MCF 10A (cell line): ENCODE measurements at regions of chr19 and their contacts with region 1.

Region 1: DNA sequence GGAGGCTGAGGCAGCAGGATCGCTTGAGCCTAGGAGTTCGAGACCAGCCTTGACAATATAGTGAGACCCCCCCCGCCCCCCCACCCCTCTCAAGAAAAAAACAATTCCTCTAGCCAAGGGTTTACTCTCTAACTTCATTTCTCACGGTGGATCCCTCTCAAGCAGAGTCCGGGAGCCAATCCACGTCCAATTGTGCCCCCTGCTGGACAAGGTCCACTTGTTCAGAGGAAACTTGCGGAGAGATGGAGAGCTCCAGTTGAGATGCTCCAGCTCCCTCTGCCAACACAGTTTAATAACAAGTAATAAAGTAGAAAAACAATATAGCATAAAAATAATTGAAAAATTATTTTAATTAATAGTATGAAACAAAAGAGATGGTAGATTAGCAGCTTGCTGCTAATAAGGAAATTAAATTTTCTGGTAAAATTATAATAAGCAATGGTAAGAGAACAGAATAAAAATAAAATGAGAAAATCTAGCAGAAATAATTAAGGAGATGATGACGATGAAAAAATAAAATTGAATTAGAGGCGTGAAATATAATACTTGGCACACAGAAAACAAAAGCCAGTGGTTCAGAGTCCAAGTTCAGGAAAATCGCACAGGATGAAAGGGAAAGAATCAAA is 14.5 kb upstream of the SIGLEC14 start:
- DNase-seq: peak; percentile 90
- H3K4me3 Mint-ChIP-seq: no peak overlapping the region
- H3K27ac Mint-ChIP-seq: no peak overlapping the region
- H3K4me1 Mint-ChIP-seq: peaks cover 7% of the 10 kb centered on the region
- H3K27me3 Mint-ChIP-seq: peaks cover 30% of the 10 kb centered on the region
- CTCF ChIP-seq: peak; percentile 66

Region 2: GRCh38 chr19:51338563-51339312 is 322.4 kb before region 1 on chr19:
- CTCF ChIA-PET with region 1: interaction called, 9 read pairs
- POLR2A ChIA-PET with region 1: interaction called, 3 read pairs
- intact Hi-C with region 1: loop called (anchors 1 kb)
- DNase-seq: peak; percentile 83
- H3K4me3 Mint-ChIP-seq: peak overlapping the region; percentile 76
- H3K27ac Mint-ChIP-seq: peak overlapping the region; percentile 33
- H3K4me1 Mint-ChIP-seq: peaks cover 11% of the 10 kb centered on the region
- H3K27me3 Mint-ChIP-seq: no peaks in the 10 kb centered on the region
- CTCF ChIP-seq: peak; percentile 86

Region 3: DNA sequence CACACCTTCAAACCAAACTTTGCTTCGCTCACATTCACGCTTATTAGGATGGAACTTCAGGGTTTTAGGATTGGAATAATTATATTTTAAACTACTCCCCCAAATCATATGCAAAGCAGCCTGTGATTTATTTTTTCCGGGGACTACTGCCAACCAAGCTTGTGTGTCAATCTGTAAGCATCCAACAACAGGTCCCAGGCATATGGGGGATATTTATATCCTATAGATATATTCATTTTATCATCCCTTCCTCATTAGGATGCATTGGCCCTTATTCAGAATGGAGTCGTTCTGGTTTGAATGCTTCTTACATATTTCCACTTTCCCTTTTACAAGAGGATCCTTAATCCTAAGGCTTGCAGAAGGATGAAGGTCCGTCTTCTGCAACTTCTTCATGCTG is 261.9 kb before region 1 on chr19:
- CTCF ChIA-PET with region 1: interaction called, 28 read pairs
- POLR2A ChIA-PET with region 1: no interaction called
- intact Hi-C with region 1: loop called (anchors 1 kb)
- DNase-seq: no peak
- H3K4me3 Mint-ChIP-seq: no peak overlapping the region
- H3K27ac Mint-ChIP-seq: no peak overlapping the region
- H3K4me1 Mint-ChIP-seq: peaks cover 7% of the 10 kb centered on the region
- H3K27me3 Mint-ChIP-seq: no peaks in the 10 kb centered on the region
- CTCF ChIP-seq: no peak

Region 4: GRCh38 chr19:51497666-51498065 is 163.4 kb before region 1 on chr19:
- CTCF ChIA-PET with region 1: no interaction called
- POLR2A ChIA-PET with region 1: no interaction called
- intact Hi-C with region 1: no loop called
- DNase-seq: no peak
- H3K4me3 Mint-ChIP-seq: no peak overlapping the region
- H3K27ac Mint-ChIP-seq: no peak overlapping the region
- H3K4me1 Mint-ChIP-seq: no peaks in the 10 kb centered on the region
- H3K27me3 Mint-ChIP-seq: no peaks in the 10 kb centered on the region
- CTCF ChIP-seq: no peak

Region 5: DNA sequence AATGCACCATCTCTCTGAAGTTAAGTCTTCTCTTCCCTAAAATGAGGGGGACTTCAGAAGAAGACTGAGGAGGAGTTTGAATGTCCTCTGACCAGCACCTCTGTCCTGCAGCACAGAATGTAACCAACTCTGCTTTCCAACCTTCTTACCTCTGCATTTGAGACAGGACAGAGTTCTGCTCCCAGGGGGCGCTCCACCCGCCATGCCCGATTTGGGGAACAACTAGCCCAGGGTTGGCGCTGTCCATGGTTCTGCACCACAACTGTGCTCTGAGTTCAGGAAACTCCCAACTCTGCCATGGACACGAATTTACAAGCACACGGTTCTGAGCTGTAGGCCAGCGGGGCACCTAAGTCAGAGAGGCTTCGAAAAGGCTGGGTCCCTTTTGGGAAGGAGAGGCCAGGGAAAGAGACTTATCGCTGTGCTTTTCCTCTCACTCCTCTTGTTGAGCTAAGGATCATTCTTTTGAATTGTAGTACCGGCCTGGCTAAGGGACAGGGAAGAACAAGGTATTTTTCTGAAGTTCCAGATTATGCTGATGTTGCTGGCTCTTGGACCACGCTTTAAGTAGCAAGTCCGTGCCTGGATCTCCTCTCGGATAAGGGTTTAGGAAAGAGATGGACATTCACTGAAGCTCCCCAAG is 53.0 kb before region 1 on chr19:
- CTCF ChIA-PET with region 1: interaction called, 7 read pairs
- POLR2A ChIA-PET with region 1: no interaction called
- intact Hi-C with region 1: loop called (anchors 2 kb)
- DNase-seq: peak; percentile 62
- H3K4me3 Mint-ChIP-seq: no peak overlapping the region
- H3K27ac Mint-ChIP-seq: no peak overlapping the region
- H3K4me1 Mint-ChIP-seq: no peaks in the 10 kb centered on the region
- H3K27me3 Mint-ChIP-seq: no peaks in the 10 kb centered on the region
- CTCF ChIP-seq: peak; percentile 45

Region 6: DNA sequence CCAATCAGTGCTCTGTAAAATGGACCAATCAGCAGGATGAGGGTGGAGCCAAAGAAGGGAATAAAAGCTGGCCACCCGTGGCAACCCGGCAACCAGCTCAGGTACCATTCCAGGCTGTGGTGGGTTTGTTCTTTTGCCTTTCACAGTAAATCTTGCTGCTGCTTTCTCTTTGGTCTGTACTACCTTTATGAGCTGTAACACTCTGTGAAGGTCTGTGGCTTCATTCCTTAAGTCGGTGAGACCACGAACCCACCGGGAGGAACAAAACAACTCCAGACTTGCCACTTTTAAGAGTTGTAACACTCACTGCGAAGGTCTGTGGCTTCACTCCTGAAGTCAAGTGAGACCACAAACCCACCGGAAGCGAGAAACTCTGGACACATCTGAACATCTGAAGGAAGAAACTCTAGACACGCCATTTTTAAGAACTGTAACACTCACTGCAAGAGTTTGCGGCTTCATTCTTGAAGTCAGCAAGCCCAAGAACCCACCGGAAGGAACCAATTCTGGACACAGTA is 15.5 kb after region 1 on chr19:
- CTCF ChIA-PET with region 1: interaction called, 18 read pairs
- POLR2A ChIA-PET with region 1: no interaction called
- intact Hi-C with region 1: no loop called
- DNase-seq: no peak
- H3K4me3 Mint-ChIP-seq: no peak overlapping the region
- H3K27ac Mint-ChIP-seq: no peak overlapping the region
- H3K4me1 Mint-ChIP-seq: no peaks in the 10 kb centered on the region
- H3K27me3 Mint-ChIP-seq: no peaks in the 10 kb centered on the region
- CTCF ChIP-seq: no peak

Region 7: GRCh38 chr19:52269338-52270261 is 608.5 kb after region 1 on chr19 and contains the start of gene ZNF766:
- CTCF ChIA-PET with region 1: no interaction called
- POLR2A ChIA-PET with region 1: no interaction called
- intact Hi-C with region 1: no loop called
- DNase-seq: peak; percentile 94
- H3K4me3 Mint-ChIP-seq: peak within 1 kb of the TSS; percentile 83
- H3K27ac Mint-ChIP-seq: peak within 1 kb of the TSS; percentile 92
- H3K4me1 Mint-ChIP-seq: peaks cover 10% of the 10 kb centered on the region
- H3K27me3 Mint-ChIP-seq: no peaks in the 10 kb centered on the region
- CTCF ChIP-seq: no peak
- total RNA-seq, gene ZNF766: 11.5 and 16.0 TPM in 2 replicates